Activated B cell treated with CpG ODN at 0.5 μM for 24 hours (primary cell): ENCODE measurements at regions of chr12 and their contacts with region 1.

Region 1: GRCh38 chr12:44015335-44015941 is 179.6 kb downstream of the TMEM117 start:
- DNase-seq: no peak
- ATAC-seq: no peak
- H3K4me3 Mint-ChIP-seq: no peak overlapping the region
- H3K27ac Mint-ChIP-seq: no peak overlapping the region
- H3K4me1 Mint-ChIP-seq: no peaks in the 10 kb centered on the region
- H3K27me3 Mint-ChIP-seq: no peaks in the 10 kb centered on the region
- CTCF ChIP-seq: no peak

Region 2: GRCh38 chr12:43957732-43958372 is 57.6 kb before region 1 on chr12:
- CTCF ChIA-PET with region 1: no interaction called
- POLR2A ChIA-PET with region 1: no interaction called
- intact Hi-C with region 1: loop called (anchors 1 kb)
- DNase-seq: no peak
- ATAC-seq: no peak
- H3K4me3 Mint-ChIP-seq: no peak overlapping the region
- H3K27ac Mint-ChIP-seq: no peak overlapping the region
- H3K4me1 Mint-ChIP-seq: no peaks in the 10 kb centered on the region
- H3K27me3 Mint-ChIP-seq: no peaks in the 10 kb centered on the region
- CTCF ChIP-seq: no peak

Region 3: DNA sequence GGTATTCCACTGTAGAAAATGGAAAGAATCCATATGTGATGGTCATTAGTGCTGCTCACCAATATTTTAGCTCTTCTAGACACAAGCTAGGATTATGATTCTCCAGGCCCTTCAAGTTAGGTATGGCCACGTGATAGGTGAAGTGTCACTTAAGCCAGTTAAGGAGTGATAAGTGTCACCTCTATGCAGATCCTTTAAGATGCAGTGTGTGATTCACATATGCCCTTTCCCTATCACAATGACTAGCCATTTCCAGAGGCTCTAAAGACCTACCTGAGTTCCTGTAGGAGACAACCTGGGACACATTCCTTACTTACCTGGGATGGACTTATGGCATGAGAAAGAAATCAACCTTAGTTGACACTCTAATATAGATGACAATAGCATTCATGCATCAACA is 517.5 kb after region 1 on chr12:
- CTCF ChIA-PET with region 1: no interaction called
- POLR2A ChIA-PET with region 1: no interaction called
- intact Hi-C with region 1: no loop called
- DNase-seq: no peak
- ATAC-seq: no peak
- H3K4me3 Mint-ChIP-seq: no peak overlapping the region
- H3K27ac Mint-ChIP-seq: no peak overlapping the region
- H3K4me1 Mint-ChIP-seq: no peaks in the 10 kb centered on the region
- H3K27me3 Mint-ChIP-seq: no peaks in the 10 kb centered on the region
- CTCF ChIP-seq: no peak

Region 4: DNA sequence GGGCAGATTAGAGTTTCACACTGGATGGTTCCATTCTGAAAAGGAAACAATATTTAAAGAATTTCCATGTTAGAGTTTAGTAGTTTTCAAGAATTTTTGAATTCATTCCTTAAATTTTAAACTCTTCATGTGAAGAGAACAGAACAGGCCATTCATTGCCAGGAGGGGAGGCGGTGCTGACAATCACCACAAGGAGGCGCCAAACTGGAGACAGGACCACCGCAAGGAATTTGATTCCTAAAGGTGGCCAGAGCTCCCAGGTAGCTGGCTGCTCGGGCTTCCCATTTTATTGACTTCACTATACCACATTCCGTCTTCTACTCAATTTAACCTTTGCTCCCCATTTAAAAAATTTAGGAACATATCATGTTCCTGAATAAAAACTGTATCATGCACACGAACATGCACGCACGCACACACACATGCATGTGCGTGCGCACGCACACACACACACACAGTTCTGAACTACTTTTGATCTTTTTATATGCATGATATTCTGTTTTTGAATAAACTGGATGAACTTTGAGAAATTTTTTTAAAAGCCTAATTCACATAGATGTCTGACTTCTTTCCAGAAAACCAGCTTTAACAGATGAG is 759.5 kb after region 1 on chr12:
- CTCF ChIA-PET with region 1: interaction called, 3 read pairs
- POLR2A ChIA-PET with region 1: no interaction called
- intact Hi-C with region 1: loop called (anchors 2 kb)
- DNase-seq: no peak
- ATAC-seq: no peak
- H3K4me3 Mint-ChIP-seq: no peak overlapping the region
- H3K27ac Mint-ChIP-seq: no peak overlapping the region
- H3K4me1 Mint-ChIP-seq: no peaks in the 10 kb centered on the region
- H3K27me3 Mint-ChIP-seq: peaks cover 4% of the 10 kb centered on the region
- CTCF ChIP-seq: peak; percentile 78

Region 5: DNA sequence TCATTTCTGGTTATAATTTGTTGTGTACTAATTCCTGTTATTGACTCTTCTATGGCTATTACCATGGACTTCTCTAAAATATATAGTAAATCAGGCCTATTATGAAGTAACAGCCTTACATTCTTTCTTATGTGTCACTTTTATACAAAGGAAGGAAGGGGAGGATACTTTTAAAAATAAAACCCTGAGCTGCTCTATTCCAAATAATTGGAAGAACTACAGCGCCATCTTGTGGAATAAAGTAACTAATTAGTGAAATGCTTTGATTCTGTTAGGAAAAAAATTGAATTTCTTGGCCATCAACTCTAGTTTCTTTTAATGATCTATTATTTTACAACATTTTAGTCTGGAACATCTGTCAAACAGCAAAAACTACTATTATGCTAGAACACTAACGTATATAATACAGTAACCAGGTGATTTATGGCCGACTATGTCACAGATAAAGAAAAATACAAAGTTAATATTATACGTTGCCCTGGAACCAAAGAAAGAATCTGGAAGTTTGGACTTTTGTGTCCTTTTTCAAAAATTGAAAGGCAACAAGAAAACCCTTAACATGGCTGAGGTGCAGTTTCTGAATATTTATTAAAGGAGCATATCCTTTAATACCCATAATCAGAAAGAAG is 915.6 kb after region 1 on chr12:
- CTCF ChIA-PET with region 1: interaction called, 30 read pairs
- POLR2A ChIA-PET with region 1: no interaction called
- intact Hi-C with region 1: loop called (anchors 1 kb)
- DNase-seq: no peak
- ATAC-seq: no peak
- H3K4me3 Mint-ChIP-seq: no peak overlapping the region
- H3K27ac Mint-ChIP-seq: no peak overlapping the region
- H3K4me1 Mint-ChIP-seq: no peaks in the 10 kb centered on the region
- H3K27me3 Mint-ChIP-seq: peaks cover 2% of the 10 kb centered on the region
- CTCF ChIP-seq: no peak

Region 6: GRCh38 chr12:44947163-44947562 is 931.7 kb after region 1 on chr12:
- CTCF ChIA-PET with region 1: interaction called, 17 read pairs
- POLR2A ChIA-PET with region 1: no interaction called
- intact Hi-C with region 1: loop called (anchors 1 kb)
- DNase-seq: no peak
- ATAC-seq: no peak
- H3K4me3 Mint-ChIP-seq: no peak overlapping the region
- H3K27ac Mint-ChIP-seq: no peak overlapping the region
- H3K4me1 Mint-ChIP-seq: peaks cover 4% of the 10 kb centered on the region
- H3K27me3 Mint-ChIP-seq: peaks cover 3% of the 10 kb centered on the region
- CTCF ChIP-seq: no peak